ENCODE measurements at regions of chr6 and their contacts with region 1.

Region 1: GRCh38 chr6:41545703-41546474 is at the start of gene FOXP4:
- DNase-seq: peak; percentile 45 to 83 (median 76)
- ATAC-seq: peak; percentile 95
- H3K4me3 ChIP-seq: peak within 1 kb of the TSS; percentile 64
- H3K4me3 Mint-ChIP-seq: peak within 1 kb of the TSS; percentile 91 to 96 (median 94)
- H3K27ac ChIP-seq: peak within 1 kb of the TSS; percentile 19
- H3K27ac Mint-ChIP-seq: peak within 1 kb of the TSS in 8 of 9 donors; percentile 7 to 86 (median 66)
- H3K4me1 ChIP-seq: peaks cover 20 to 27% of the 10 kb centered on the region in 2 donors
- H3K4me1 Mint-ChIP-seq: peaks cover 6 to 42% (median 25%) of the 10 kb centered on the region in 7 donors
- H3K27me3 ChIP-seq: peaks cover 2 to 9% of the 10 kb centered on the region in 2 donors
- H3K27me3 Mint-ChIP-seq: peaks cover 10 to 73% (median 16%) of the 10 kb centered on the region in 5 donors
- total RNA-seq, gene FOXP4: 3.1 to 7.6 (median 4.9) TPM

Region 2: DNA sequence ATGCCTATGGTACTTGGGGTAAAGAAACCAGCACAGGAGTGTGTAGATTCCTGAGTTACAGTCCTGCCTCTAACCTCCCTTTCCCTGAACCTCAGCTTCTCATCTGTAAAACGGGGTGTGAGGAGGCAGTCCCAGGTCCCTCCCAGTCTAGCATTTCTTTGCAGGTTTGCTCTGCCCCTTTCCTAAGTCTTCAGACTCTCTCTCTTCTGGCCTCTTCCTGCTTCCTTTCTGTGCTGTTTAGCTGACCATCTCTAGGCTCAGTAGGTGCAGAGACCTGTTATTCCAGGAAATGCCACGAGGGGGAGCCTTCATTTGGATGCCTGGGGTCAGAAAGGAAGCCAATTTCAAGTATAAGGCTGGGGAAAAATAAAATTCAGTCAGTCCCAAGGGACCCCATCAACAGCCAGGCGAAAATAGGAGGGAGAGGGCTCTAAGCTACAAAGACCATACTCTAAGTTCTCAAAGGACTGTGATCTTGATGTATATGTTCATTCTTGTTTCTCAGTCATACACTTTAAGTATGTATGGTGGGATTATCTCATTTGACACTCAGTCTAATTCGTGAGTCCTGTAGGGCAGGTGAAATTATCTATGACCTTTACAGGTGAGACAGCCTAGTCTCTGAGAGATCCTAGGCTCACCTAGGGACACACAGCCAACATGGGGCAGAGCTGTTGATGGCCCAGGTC is 121.4 kb before region 1 on chr6:
- CTCF ChIA-PET with region 1: interaction called, 9 read pairs
- POLR2A ChIA-PET with region 1: no interaction called
- intact Hi-C with region 1: loop called (anchors 1 kb)
- DNase-seq: peak; percentile 47 to 81 (median 67)
- ATAC-seq: peak; percentile 77
- H3K4me3 ChIP-seq: no peak overlapping the region
- H3K4me3 Mint-ChIP-seq: no peak overlapping the region
- H3K27ac ChIP-seq: no peak overlapping the region
- H3K27ac Mint-ChIP-seq: no peak overlapping the region
- H3K4me1 ChIP-seq: peaks cover 0 to 25% of the 10 kb centered on the region in 2 donors
- H3K4me1 Mint-ChIP-seq: peaks cover 6 to 10% (median 9%) of the 10 kb centered on the region in 7 donors
- H3K27me3 ChIP-seq: peaks cover 6 to 21% of the 10 kb centered on the region in 2 donors
- H3K27me3 Mint-ChIP-seq: peaks cover 15 to 33% (median 22%) of the 10 kb centered on the region in 5 donors

Region 3: DNA sequence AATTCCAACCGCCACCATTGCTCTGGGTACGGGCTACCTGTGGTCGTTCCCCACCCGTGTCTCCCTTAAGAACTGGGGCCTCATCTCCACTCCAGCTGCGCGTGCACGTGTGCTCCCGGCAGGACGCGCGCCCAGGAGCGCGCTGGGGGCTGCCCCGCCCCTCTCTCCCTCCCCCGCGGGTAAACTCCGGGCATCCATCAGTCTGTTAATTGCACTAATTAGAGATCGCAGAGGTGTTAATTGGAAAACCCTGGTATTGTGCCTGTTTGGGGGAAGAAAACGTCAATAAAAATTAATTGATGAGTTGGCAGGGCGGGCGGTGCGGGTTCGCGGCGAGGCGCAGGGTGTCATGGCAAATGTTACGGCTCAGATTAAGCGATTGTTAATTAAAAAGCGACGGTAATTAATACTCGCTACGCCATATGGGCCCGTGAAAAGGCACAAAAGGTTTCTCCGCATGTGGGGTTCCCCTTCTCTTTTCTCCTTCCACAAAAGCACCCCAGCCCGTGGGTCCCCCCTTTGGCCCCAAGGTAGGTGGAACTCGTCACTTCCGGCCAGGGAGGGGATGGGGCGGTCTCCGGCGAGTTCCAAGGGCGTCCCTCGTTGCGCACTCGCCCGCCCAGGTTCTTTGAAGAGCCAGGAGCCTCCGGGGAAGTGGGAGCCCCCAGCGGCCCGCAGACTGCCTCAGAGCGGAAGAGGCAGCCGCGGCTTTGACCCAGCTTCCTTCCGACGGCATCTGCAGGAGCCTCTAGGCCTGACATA is 14.7 kb after region 1 on chr6:
- CTCF ChIA-PET with region 1: no interaction called
- POLR2A ChIA-PET with region 1: interaction called, 3 read pairs
- intact Hi-C with region 1: loop called (anchors 1 kb)
- DNase-seq: peak; percentile 73 to 94 (median 85)
- ATAC-seq: peak; percentile 97
- H3K4me3 ChIP-seq: peak overlapping the region; percentile 80
- H3K4me3 Mint-ChIP-seq: peak overlapping the region; percentile 82 to 90 (median 86)
- H3K27ac ChIP-seq: peak overlapping the region; percentile 72
- H3K27ac Mint-ChIP-seq: peak overlapping the region in 8 of 9 donors; percentile 46 to 91 (median 82)
- H3K4me1 ChIP-seq: peaks cover 19 to 24% of the 10 kb centered on the region in 2 donors
- H3K4me1 Mint-ChIP-seq: peaks cover 8 to 33% (median 22%) of the 10 kb centered on the region in 7 donors
- H3K27me3 ChIP-seq: no peaks in the 10 kb centered on the region
- H3K27me3 Mint-ChIP-seq: peaks cover 0 to 58% (median 0%) of the 10 kb centered on the region in 5 donors

Region 4: GRCh38 chr6:41683510-41684310 is 137.8 kb after region 1 on chr6:
- CTCF ChIA-PET with region 1: no interaction called
- POLR2A ChIA-PET with region 1: no interaction called
- intact Hi-C with region 1: loop called in 1 of 2 experiments (anchors 1 kb)
- DNase-seq: peak; percentile 57 to 83 (median 76)
- ATAC-seq: peak; percentile 91
- H3K4me3 ChIP-seq: peak overlapping the region; percentile 61
- H3K4me3 Mint-ChIP-seq: peak overlapping the region; percentile 51 to 84 (median 78)
- H3K27ac ChIP-seq: peak overlapping the region; percentile 53
- H3K27ac Mint-ChIP-seq: peak overlapping the region in 8 of 9 donors; percentile 43 to 86 (median 76)
- H3K4me1 ChIP-seq: peaks cover 3 to 4% of the 10 kb centered on the region in 2 donors
- H3K4me1 Mint-ChIP-seq: peaks cover 0 to 15% (median 11%) of the 10 kb centered on the region in 7 donors
- H3K27me3 ChIP-seq: no peaks in the 10 kb centered on the region
- H3K27me3 Mint-ChIP-seq: peaks cover 0 to 4% (median 0%) of the 10 kb centered on the region in 5 donors

Measured in naive thymus-derived CD4-positive, alpha-beta T cell (primary cell).